Vagina (tissue), 2 donors: ENCODE measurements at regions of chr16 and their contacts with region 1.

Region 1: GRCh38 chr16:3317315-3317999 is 12.2 kb downstream of the ZNF75A start:
- DNase-seq: no peak
- H3K4me3 ChIP-seq: no peak overlapping the region
- H3K27ac ChIP-seq: no peak overlapping the region
- H3K4me1 ChIP-seq: no peaks in the 10 kb centered on the region
- H3K27me3 ChIP-seq: no peaks in the 10 kb centered on the region
- CTCF ChIP-seq: no peak
- POLR2A ChIP-seq: no peak

Region 2: GRCh38 chr16:3173892-3174617 is 143.4 kb before region 1 on chr16:
- intact Hi-C with region 1: no loop called
- DNase-seq: no peak
- H3K4me3 ChIP-seq: no peak overlapping the region
- H3K27ac ChIP-seq: no peak overlapping the region
- H3K4me1 ChIP-seq: peaks cover 24% of the 10 kb centered on the region
- H3K27me3 ChIP-seq: peaks cover 3% of the 10 kb centered on the region
- CTCF ChIP-seq: no peak
- POLR2A ChIP-seq: no peak

Region 3: GRCh38 chr16:3383045-3383448 is 65.6 kb after region 1 on chr16:
- intact Hi-C with region 1: loop called (anchors 10 kb)
- DNase-seq: no peak
- H3K4me3 ChIP-seq: no peak overlapping the region
- H3K27ac ChIP-seq: no peak overlapping the region
- H3K4me1 ChIP-seq: no peaks in the 10 kb centered on the region
- H3K27me3 ChIP-seq: no peaks in the 10 kb centered on the region
- CTCF ChIP-seq: no peak
- POLR2A ChIP-seq: no peak